ENCODE measurements at regions of chr12 and their contacts with region 1.

Region 1: GRCh38 chr12:106386813-106387535 is 29.4 kb downstream of the POLR3B start:
- DNase-seq: no peak
- ATAC-seq: no peak
- H3K4me3 ChIP-seq: no peak overlapping the region
- H3K4me3 Mint-ChIP-seq: no peak overlapping the region
- H3K27ac ChIP-seq: no peak overlapping the region
- H3K27ac Mint-ChIP-seq: no peak overlapping the region
- H3K4me1 ChIP-seq: no peaks in the 10 kb centered on the region
- H3K4me1 Mint-ChIP-seq: no peaks in the 10 kb centered on the region
- H3K27me3 ChIP-seq: no peaks in the 10 kb centered on the region
- H3K27me3 Mint-ChIP-seq: no peaks in the 10 kb centered on the region
- CTCF ChIP-seq: no peak

Region 2: GRCh38 chr12:106919910-106920544 is 533.1 kb after region 1 on chr12:
- intact Hi-C with region 1: loop called (anchors 1 kb)
- DNase-seq: peak in 1 of 2 donors; percentile 74
- ATAC-seq: peak; percentile 44 to 55 (median 48)
- H3K4me3 ChIP-seq: no peak overlapping the region
- H3K4me3 Mint-ChIP-seq: no peak overlapping the region
- H3K27ac ChIP-seq: no peak overlapping the region
- H3K27ac Mint-ChIP-seq: no peak overlapping the region
- H3K4me1 ChIP-seq: peaks cover 1% of the 10 kb centered on the region
- H3K4me1 Mint-ChIP-seq: peaks cover 13 to 14% of the 10 kb centered on the region in 2 donors
- H3K27me3 ChIP-seq: peaks cover 5% of the 10 kb centered on the region
- H3K27me3 Mint-ChIP-seq: peaks cover 25 to 29% of the 10 kb centered on the region in 2 donors
- CTCF ChIP-seq: peak; percentile 89

Region 3: GRCh38 chr12:107105410-107105703 is 718.4 kb after region 1 on chr12:
- intact Hi-C with region 1: loop called (anchors 5 kb)
- DNase-seq: no peak
- ATAC-seq: no peak
- H3K4me3 ChIP-seq: no peak overlapping the region
- H3K4me3 Mint-ChIP-seq: no peak overlapping the region
- H3K27ac ChIP-seq: no peak overlapping the region
- H3K27ac Mint-ChIP-seq: no peak overlapping the region
- H3K4me1 ChIP-seq: no peaks in the 10 kb centered on the region
- H3K4me1 Mint-ChIP-seq: no peaks in the 10 kb centered on the region
- H3K27me3 ChIP-seq: no peaks in the 10 kb centered on the region
- H3K27me3 Mint-ChIP-seq: peaks cover 11 to 13% of the 10 kb centered on the region in 2 donors
- CTCF ChIP-seq: no peak